ENCODE measurements at regions of chr5 and their contacts with region 1.

Region 1: GRCh38 chr5:25033658-25034057 is 388.9 kb upstream of the CDH10 start:
- DNase-seq: no peak
- ATAC-seq: no peak
- H3K4me3 ChIP-seq: no peak overlapping the region
- H3K27ac ChIP-seq: no peak overlapping the region
- H3K4me1 ChIP-seq: no peaks in the 10 kb centered on the region
- H3K27me3 ChIP-seq: no peaks in the 10 kb centered on the region
- CTCF ChIP-seq: no peak

Region 2: GRCh38 chr5:24905121-24905520 is 128.5 kb before region 1 on chr5:
- CTCF ChIA-PET with region 1: no interaction called
- POLR2A ChIA-PET with region 1: no interaction called
- in situ Hi-C with region 1: no loop called
- intact Hi-C with region 1: no loop called
- DNase-seq: no peak
- ATAC-seq: no peak
- H3K4me3 ChIP-seq: no peak overlapping the region
- H3K27ac ChIP-seq: no peak overlapping the region
- H3K4me1 ChIP-seq: no peaks in the 10 kb centered on the region
- H3K27me3 ChIP-seq: no peaks in the 10 kb centered on the region
- CTCF ChIP-seq: no peak

Region 3: GRCh38 chr5:25006737-25007302 is 26.8 kb before region 1 on chr5:
- CTCF ChIA-PET with region 1: no interaction called
- POLR2A ChIA-PET with region 1: no interaction called
- in situ Hi-C with region 1: no loop called
- intact Hi-C with region 1: loop called (anchors 1 kb)
- DNase-seq: peak; percentile 15
- ATAC-seq: peak; percentile 66; the same call in 1 of the 2 replicates
- H3K4me3 ChIP-seq: no peak overlapping the region
- H3K27ac ChIP-seq: no peak overlapping the region
- H3K4me1 ChIP-seq: no peaks in the 10 kb centered on the region
- H3K27me3 ChIP-seq: no peaks in the 10 kb centered on the region
- CTCF ChIP-seq: peak; percentile 50; the same call in 1 of the 2 replicates